GM10248 (cell line): ENCODE measurements at regions of chr3 and their contacts with region 1.

Region 1: GRCh38 chr3:184017672-184018423 is at the start of gene ABCC5:
- DNase-seq: peak; percentile 94
- CTCF ChIP-seq: no peak

Region 2: DNA sequence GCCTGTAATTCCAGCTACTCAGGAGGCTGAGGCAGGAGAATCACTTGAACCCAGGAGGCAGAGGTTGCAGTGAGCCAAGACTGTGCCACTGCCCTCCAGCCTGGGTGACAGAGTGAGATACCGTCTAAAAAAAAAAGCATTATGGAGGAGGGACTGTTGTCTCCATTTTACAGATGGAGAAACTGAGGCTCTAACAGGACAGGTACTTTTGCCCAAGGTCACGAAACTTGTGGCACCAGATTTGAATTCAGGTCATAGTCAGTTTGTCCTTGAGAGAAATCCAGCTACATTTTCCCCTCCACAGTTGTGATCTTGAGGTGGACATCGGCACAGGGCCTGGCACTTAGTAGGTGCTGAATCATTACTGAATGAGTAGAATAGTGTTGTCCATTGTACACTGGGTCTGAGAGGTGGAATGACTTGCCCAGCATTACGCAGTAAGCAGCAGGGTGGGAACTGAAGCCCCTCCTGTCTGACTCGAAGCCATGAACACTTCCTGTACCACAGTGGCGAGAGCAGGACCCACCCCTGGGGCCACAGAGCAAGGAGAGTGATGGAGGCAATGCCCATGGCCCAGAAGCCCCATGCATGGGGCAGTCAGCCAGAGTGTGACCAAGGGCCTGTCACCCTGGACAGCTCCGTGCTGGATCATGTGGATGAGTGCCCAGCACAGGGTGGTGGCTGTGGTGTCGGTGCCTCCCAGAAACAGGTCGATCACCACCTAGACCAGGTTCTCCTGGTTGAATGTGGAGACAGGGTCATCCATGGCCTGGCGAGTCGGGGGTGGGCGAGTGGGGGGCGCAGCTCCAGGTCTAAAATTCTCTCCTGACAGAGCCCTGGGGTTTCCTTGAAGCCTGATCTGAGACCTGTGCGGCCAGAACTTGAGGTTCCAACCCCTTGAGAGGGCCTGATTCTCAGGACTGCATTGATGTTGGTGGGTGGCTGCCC is 112.7 kb before region 1 on chr3:
- CTCF ChIA-PET with region 1: interaction called, 14 read pairs
- POLR2A ChIA-PET with region 1: no interaction called
- DNase-seq: no peak
- CTCF ChIP-seq: no peak

Region 3: GRCh38 chr3:184005941-184006507 is 11.8 kb before region 1 on chr3:
- CTCF ChIA-PET with region 1: interaction called, 23 read pairs
- POLR2A ChIA-PET with region 1: no interaction called
- DNase-seq: peak; percentile 51
- CTCF ChIP-seq: no peak